ENCODE measurements at regions of chr5 and their contacts with region 1.

Region 1: DNA sequence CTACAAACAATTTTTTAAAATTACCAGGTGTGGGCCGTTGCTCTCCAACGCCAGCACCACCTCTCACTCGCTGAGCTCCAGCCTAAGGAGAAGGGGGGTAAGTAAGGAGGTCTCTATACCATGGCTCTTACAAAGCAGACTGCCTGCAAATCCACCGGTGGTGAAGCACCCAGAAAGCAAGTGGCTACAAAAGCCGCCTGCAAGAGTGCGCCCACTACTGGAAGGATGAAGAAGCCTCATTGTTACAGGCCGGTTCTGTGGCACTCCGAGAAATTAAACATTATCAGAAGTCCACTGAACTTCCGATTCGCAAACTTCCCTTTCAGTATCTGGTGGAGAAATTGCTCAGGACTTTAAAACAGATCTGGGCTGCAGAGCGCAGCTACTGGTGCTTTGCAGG is 46.0 kb downstream of the CDO1 start:
- DNase-seq: no peak
- ATAC-seq: no peak
- H3K4me3 ChIP-seq: no peak overlapping the region
- H3K27ac ChIP-seq: no peak overlapping the region
- H3K4me1 ChIP-seq: peaks cover 0 to 44% (median 17%) of the 10 kb centered on the region in 12 donors
- H3K27me3 ChIP-seq: no peaks in the 10 kb centered on the region
- CTCF ChIP-seq: peak in 3 of 12 donors; percentile 9 to 18 (median 12)
- POLR2A ChIP-seq: no peak

Region 2: DNA sequence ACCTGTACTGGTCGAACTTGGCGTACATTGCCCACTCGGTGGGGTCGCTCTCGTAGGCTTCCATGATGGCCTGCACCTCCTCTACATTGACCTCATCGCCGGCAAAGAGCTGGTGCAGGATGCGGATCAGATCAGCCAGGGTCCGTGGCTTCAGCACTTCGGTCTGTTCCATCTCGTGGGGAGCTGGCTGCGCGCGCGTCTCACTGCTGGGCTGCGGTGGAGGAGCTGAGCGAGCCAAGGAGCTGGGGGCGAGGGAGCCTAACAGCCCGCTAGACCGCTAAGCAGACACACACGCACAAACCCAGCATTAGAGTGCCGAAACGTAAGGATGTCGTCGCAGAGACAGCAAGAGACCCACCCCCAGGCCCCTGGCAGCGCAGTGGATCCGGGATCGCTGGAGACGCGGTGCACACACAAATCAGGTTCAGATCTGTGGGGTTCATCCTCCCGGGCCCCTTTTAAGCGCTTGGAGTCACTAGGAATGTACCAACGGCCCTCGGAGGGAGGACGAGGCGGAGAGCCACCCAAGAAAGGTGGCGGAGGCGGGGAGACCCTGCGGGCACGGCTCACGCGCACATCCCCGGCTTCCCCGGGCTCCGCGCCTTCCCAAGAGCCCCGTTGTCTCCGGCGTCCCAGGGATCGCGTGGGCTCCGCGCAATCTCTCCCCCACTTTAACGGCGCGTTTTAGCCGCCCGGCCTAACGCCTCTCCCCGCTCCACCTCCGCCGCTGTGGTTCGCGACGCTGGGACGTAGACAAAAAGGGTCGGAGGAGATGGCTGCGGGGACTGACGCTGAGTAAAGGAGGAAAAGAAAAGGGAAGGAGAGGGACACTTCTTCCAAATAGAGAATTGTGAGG is 46.0 kb after region 1 on chr5 and contains the start of gene CDO1:
- intact Hi-C with region 1: loop called in 1 of 10 experiments (anchors 5 kb)
- DNase-seq: peak; percentile 49 to 73 (median 55)
- ATAC-seq: peak; percentile 70 to 88 (median 84)
- H3K4me3 ChIP-seq: peak within 1 kb of the TSS; percentile 39 to 79 (median 60)
- H3K27ac ChIP-seq: peak within 1 kb of the TSS; percentile 45 to 89 (median 68)
- H3K4me1 ChIP-seq: peaks cover 0 to 21% (median 2%) of the 10 kb centered on the region in 12 donors
- H3K27me3 ChIP-seq: peaks cover 0 to 61% (median 32%) of the 10 kb centered on the region in 9 donors
- CTCF ChIP-seq: no peak
- POLR2A ChIP-seq: no peak
- total RNA-seq, gene CDO1: 2.7 to 37.2 (median 5.2) TPM